ENCODE measurements at regions of chr12 and their contacts with region 1.

Region 1: GRCh38 chr12:28998637-28999120 is 150.4 kb upstream of the FAR2 start:
- DNase-seq: no peak
- ATAC-seq: no peak
- H3K4me3 ChIP-seq: no peak overlapping the region
- H3K4me3 Mint-ChIP-seq: no peak overlapping the region
- H3K27ac ChIP-seq: no peak overlapping the region
- H3K27ac Mint-ChIP-seq: no peak overlapping the region
- H3K4me1 ChIP-seq: no peaks in the 10 kb centered on the region
- H3K4me1 Mint-ChIP-seq: no peaks in the 10 kb centered on the region
- H3K27me3 ChIP-seq: peaks cover 0 to 3% of the 10 kb centered on the region in 2 experiments
- H3K27me3 Mint-ChIP-seq: peaks cover 20% of the 10 kb centered on the region
- CTCF ChIP-seq: no peak

Region 2: DNA sequence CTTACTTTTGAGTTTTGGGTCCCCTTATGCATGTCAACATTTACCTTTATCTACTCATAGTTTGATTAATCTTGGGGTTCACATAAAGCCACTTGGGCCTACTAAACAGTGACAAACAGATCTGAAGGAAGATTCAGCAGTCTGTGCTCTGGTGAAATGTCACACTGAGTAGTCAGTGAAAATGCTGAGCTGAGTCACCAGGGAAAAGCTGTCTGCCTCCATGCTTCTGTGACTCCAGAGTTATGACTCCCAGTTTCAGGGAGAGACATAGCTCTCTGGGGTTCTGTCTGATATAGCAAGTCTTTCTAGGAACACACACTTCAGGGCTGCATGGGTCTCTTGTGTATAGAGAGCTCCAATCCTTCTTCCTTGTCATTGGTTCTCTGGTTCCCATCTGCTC is 255.9 kb before region 1 on chr12:
- CTCF ChIA-PET with region 1: no interaction called
- POLR2A ChIA-PET with region 1: no interaction called
- intact Hi-C with region 1: no loop called
- DNase-seq: no peak
- ATAC-seq: no peak
- H3K4me3 ChIP-seq: no peak overlapping the region
- H3K4me3 Mint-ChIP-seq: no peak overlapping the region
- H3K27ac ChIP-seq: no peak overlapping the region
- H3K27ac Mint-ChIP-seq: no peak overlapping the region
- H3K4me1 ChIP-seq: no peaks in the 10 kb centered on the region
- H3K4me1 Mint-ChIP-seq: no peaks in the 10 kb centered on the region
- H3K27me3 ChIP-seq: no peaks in the 10 kb centered on the region
- H3K27me3 Mint-ChIP-seq: no peaks in the 10 kb centered on the region
- CTCF ChIP-seq: no peak

Region 3: GRCh38 chr12:28963554-28963953 is 35.1 kb before region 1 on chr12:
- CTCF ChIA-PET with region 1: no interaction called
- POLR2A ChIA-PET with region 1: no interaction called
- intact Hi-C with region 1: loop called in 1 of 2 experiments (anchors 5 kb)
- DNase-seq: peak in 1 of 14 experiments; percentile 1
- ATAC-seq: no peak
- H3K4me3 ChIP-seq: no peak overlapping the region
- H3K4me3 Mint-ChIP-seq: no peak overlapping the region
- H3K27ac ChIP-seq: no peak overlapping the region
- H3K27ac Mint-ChIP-seq: no peak overlapping the region
- H3K4me1 ChIP-seq: no peaks in the 10 kb centered on the region
- H3K4me1 Mint-ChIP-seq: no peaks in the 10 kb centered on the region
- H3K27me3 ChIP-seq: peaks cover 4 to 5% of the 10 kb centered on the region in 2 experiments
- H3K27me3 Mint-ChIP-seq: peaks cover 19% of the 10 kb centered on the region
- CTCF ChIP-seq: no peak

Measured in CD4-positive, alpha-beta T cell (primary cell).